CD4-positive, alpha-beta memory T cell (primary cell): ENCODE measurements at regions of chr18 and their contacts with region 1.

Region 1: DNA sequence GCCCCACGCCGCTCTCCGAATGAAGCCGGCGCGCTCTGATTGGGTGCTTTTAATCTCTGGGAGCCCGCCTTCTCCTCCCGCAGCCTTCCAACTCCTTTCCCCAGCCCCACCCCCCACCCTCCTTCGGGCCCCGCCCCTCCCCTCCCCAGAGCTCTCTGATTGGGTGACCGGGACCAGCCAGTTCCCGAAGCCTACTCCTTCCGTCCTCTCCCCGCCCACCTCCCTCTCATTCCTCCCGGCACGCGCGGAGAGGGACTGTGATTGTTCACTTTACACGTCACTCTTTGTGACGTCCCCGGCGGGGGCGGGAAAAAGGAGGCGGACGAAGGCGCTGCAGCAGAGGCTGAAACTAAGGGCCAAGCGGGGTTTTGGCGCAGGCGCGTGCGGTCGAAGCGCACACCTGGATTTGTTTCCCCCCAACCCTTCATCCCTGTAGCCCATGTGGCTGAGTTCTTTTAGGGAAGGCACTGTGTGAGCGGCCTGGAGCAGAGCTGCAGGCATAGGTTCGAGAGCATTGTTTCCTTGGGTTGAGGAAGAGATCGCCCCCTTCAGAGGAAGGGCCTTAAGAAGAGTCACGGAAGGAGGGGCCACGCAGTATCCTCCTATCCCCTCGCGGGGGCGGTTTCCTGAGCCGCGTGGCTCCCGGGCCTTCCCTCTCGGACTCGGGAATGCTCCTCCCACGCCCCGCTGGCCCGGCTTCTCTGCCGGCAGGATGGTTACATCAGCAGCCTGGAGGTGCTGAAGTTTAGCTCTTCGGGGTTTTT is at the start of gene MEX3C:
- DNase-seq: peak; percentile 98 to 99 (median 99)
- H3K4me3 ChIP-seq: peak within 1 kb of the TSS; percentile 76 to 94
- H3K4me3 Mint-ChIP-seq: peak within 1 kb of the TSS; percentile 95 to 98 (median 97)
- H3K27ac ChIP-seq: peak within 1 kb of the TSS; percentile 77
- H3K27ac Mint-ChIP-seq: peak within 1 kb of the TSS; percentile 95 to 99 (median 98)
- H3K4me1 ChIP-seq: peaks cover 24% of the 10 kb centered on the region
- H3K4me1 Mint-ChIP-seq: peaks cover 20 to 39% (median 27%) of the 10 kb centered on the region in 4 donors
- H3K27me3 ChIP-seq: no peaks in the 10 kb centered on the region
- H3K27me3 Mint-ChIP-seq: no peaks in the 10 kb centered on the region
- total RNA-seq, gene MEX3C: 60.9 to 64.8 TPM

Region 2: DNA sequence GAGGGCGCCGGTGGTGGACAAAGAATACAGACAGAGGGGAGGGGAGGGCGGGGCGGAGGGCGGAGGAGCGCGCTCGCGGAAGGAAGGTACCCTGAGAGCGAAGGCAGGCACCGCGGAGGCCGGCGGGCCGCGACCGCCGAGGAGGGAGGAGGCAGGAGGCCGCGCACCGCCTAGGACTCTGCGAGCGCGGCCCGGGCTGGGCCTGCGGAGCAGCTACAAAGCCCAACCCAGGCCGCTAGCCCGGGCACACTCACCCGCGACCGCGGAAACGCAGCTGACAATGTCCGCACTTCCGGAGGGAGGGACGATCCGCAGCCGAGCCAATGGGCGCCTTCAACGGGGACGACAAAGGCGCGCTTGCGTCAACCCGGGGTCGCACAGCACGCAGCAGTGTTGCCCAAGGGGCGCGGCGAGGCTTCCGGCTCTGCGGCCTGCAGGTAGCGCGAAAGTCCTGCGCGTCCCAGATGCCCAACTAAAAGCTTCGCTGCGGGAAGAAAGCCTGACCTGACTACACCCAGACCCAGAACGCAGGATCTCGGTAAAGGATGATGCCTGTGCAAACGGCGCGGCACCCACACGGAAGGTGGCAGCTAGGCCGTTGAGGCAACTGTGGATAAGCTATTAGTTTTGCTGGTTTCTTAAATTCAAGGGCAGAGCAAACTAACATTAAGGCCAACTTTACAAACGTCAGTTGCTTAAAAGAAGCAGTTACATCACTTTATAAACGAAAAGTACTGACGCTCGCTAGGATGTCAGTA is 1710.7 kb before region 1 on chr18 and contains the start of gene C18orf32:
- CTCF ChIA-PET with region 1: no interaction called
- POLR2A ChIA-PET with region 1: no interaction called
- intact Hi-C with region 1: loop called (anchors 10 kb)
- DNase-seq: peak; percentile 93 to 97 (median 94)
- H3K4me3 ChIP-seq: peak within 1 kb of the TSS; percentile 66 to 71
- H3K4me3 Mint-ChIP-seq: peak within 1 kb of the TSS; percentile 91 to 99 (median 96)
- H3K27ac ChIP-seq: peak within 1 kb of the TSS; percentile 81
- H3K27ac Mint-ChIP-seq: peak within 1 kb of the TSS; percentile 93 to 100 (median 98)
- H3K4me1 ChIP-seq: peaks cover 66% of the 10 kb centered on the region
- H3K4me1 Mint-ChIP-seq: peaks cover 49 to 82% (median 63%) of the 10 kb centered on the region in 4 donors
- H3K27me3 ChIP-seq: no peaks in the 10 kb centered on the region
- H3K27me3 Mint-ChIP-seq: no peaks in the 10 kb centered on the region
- total RNA-seq, gene C18orf32: 48.7 to 55.3 TPM

Region 3: GRCh38 chr18:50287441-50288347 is 910.1 kb before region 1 on chr18 and contains the start of gene CXXC1:
- CTCF ChIA-PET with region 1: no interaction called
- POLR2A ChIA-PET with region 1: no interaction called
- intact Hi-C with region 1: loop called (anchors 5 kb)
- DNase-seq: peak; percentile 96 to 99 (median 98)
- H3K4me3 ChIP-seq: peak within 1 kb of the TSS; percentile 82 to 88
- H3K4me3 Mint-ChIP-seq: peak within 1 kb of the TSS; percentile 96 to 100 (median 99)
- H3K27ac ChIP-seq: peak within 1 kb of the TSS; percentile 82
- H3K27ac Mint-ChIP-seq: peak within 1 kb of the TSS; percentile 91 to 100 (median 100)
- H3K4me1 ChIP-seq: peaks cover 14% of the 10 kb centered on the region
- H3K4me1 Mint-ChIP-seq: peaks cover 19 to 44% (median 28%) of the 10 kb centered on the region in 4 donors
- H3K27me3 ChIP-seq: no peaks in the 10 kb centered on the region
- H3K27me3 Mint-ChIP-seq: no peaks in the 10 kb centered on the region
- total RNA-seq, gene CXXC1: 165 to 191 TPM

Region 4: DNA sequence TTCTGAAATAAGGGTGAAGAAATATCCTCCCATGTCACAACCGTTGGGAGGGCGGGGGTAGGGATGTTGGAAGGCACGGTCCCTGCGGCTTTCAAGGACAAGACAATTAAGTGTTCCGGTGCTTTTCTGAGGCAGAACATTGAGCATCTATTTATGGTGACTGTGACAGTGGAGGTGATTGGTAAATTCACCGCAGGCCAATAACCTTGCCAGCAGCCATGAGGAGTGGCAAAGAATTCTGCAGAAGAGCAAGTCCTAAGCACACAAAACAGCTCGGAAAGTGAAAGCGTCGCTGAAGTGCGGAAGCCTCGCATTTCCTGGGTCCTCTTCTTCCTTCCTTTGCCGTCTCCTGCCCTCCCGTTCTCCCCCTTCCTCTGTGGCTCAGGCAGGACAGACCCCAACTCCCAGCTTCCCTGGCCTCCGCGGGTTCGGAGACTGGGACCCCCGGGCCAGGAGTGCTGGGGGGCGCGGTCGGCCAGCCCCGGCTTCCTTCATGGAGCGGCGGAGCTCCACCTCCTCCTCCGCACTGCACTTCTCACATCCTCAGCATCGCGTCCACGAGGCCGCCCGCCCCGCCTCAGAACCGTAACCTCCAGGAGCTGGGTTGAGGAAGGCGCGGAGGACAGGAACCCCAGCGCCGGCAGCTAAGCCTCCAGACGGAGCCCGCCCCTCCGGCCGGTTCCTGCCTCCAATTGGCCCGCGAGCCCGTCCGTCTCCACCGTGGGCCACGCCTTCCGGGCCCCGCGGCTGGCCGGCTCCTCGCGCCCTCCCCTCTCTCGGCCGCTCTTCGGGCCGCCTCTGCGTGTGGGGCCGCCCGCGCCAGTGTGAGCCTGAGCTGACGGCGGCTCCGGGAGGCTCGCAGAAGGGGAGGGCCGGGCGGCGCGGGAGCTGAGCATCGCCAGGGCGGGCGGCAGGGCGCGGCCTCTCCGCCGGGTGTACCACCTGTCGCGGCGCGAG is 319.2 kb before region 1 on chr18 and contains the start of gene ME2:
- CTCF ChIA-PET with region 1: interaction called, 3 read pairs
- POLR2A ChIA-PET with region 1: interaction called, 36 read pairs
- intact Hi-C with region 1: loop called (anchors 1 kb)
- DNase-seq: peak; percentile 86 to 94 (median 87)
- H3K4me3 ChIP-seq: peak within 1 kb of the TSS; percentile 76 to 94
- H3K4me3 Mint-ChIP-seq: peak within 1 kb of the TSS; percentile 97 to 99 (median 99)
- H3K27ac ChIP-seq: peak within 1 kb of the TSS; percentile 88
- H3K27ac Mint-ChIP-seq: peak within 1 kb of the TSS; percentile 96 to 99 (median 99)
- H3K4me1 ChIP-seq: peaks cover 44% of the 10 kb centered on the region
- H3K4me1 Mint-ChIP-seq: peaks cover 19 to 32% (median 26%) of the 10 kb centered on the region in 4 donors
- H3K27me3 ChIP-seq: no peaks in the 10 kb centered on the region
- H3K27me3 Mint-ChIP-seq: no peaks in the 10 kb centered on the region
- total RNA-seq, gene ME2: 48.6 to 53.5 TPM

Region 5: DNA sequence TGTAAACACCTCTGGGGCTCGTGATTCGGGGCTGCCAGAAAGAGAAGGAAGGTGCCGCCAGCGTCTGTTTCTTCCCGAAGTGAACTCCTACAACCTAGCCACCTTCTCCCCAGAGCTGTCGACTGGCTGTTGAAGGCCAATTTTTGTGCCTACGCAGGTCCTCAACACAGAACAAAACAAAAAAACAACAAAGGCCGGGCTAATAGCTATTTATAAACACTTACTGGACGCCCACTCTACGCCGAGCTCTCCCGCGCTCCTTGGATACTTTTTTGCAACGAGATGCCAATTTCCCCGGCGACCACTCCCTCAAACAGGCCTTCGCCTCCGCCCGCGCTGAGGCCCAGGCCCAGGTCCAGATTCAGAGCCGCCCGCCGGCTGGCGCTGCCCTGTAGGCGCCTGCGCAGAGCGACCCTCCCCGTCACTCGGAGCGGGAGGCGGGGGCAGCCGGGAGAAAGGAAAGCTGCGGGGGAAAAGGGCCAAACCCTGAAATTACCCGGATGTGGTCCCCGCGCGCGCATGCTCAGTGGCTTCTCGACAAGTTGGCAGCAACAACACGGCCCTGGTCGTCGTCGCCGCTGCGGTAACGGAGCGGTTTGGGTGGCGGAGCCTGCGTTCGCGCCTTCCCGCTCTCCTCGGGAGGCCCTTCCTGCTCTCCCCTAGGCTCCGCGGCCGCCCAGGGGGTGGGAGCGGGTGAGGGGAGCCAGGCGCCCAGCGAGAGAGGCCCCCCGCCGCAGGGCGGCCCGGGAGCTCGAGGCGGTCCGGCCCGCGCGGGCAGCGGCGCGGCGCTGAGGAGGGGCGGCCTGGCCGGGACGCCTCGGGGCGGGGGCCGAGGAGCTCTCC is 167.9 kb before region 1 on chr18 and contains the start of gene SMAD4:
- CTCF ChIA-PET with region 1: no interaction called
- POLR2A ChIA-PET with region 1: interaction called, 48 read pairs
- intact Hi-C with region 1: loop called (anchors 1 kb)
- DNase-seq: peak; percentile 96 to 98 (median 97)
- H3K4me3 ChIP-seq: peak within 1 kb of the TSS; percentile 47 to 53
- H3K4me3 Mint-ChIP-seq: peak within 1 kb of the TSS; percentile 95 to 100 (median 98)
- H3K27ac ChIP-seq: peak within 1 kb of the TSS; percentile 83
- H3K27ac Mint-ChIP-seq: peak within 1 kb of the TSS; percentile 98 to 99 (median 99)
- H3K4me1 ChIP-seq: peaks cover 80% of the 10 kb centered on the region
- H3K4me1 Mint-ChIP-seq: peaks cover 39 to 63% (median 48%) of the 10 kb centered on the region in 4 donors
- H3K27me3 ChIP-seq: no peaks in the 10 kb centered on the region
- H3K27me3 Mint-ChIP-seq: no peaks in the 10 kb centered on the region
- total RNA-seq, gene SMAD4: 143 to 155 TPM

Region 6: DNA sequence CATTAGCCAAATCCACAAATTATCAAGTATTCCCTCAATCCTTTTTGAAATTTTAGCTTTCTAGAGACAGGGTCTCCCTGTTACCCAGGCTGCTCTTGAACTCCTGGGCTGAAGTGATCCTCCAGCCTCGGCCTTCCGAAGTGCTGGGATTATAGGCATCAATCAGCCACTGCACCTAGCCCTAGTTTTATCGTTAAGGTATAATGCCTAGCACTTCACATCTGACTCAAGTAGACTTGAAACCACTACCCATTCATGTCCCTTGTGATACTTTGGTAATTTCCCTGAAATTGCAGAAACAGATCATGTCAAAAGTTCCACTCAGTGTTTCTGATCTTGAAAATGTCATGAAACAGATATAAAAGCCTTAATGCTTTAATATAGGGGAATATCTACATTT is 26.6 kb before region 1 on chr18:
- CTCF ChIA-PET with region 1: no interaction called
- POLR2A ChIA-PET with region 1: interaction called, 19 read pairs
- intact Hi-C with region 1: loop called (anchors 2 kb)
- DNase-seq: no peak
- H3K4me3 ChIP-seq: no peak overlapping the region
- H3K4me3 Mint-ChIP-seq: no peak overlapping the region
- H3K27ac ChIP-seq: no peak overlapping the region
- H3K27ac Mint-ChIP-seq: peak overlapping the region in 2 of 7 donors; percentile 13 to 55
- H3K4me1 ChIP-seq: peaks cover 23% of the 10 kb centered on the region
- H3K4me1 Mint-ChIP-seq: peaks cover 28 to 51% (median 31%) of the 10 kb centered on the region in 4 donors
- H3K27me3 ChIP-seq: no peaks in the 10 kb centered on the region
- H3K27me3 Mint-ChIP-seq: no peaks in the 10 kb centered on the region